GM12878 (cell line): ENCODE measurements at regions of chrX and their contacts with region 1.

Region 1: DNA sequence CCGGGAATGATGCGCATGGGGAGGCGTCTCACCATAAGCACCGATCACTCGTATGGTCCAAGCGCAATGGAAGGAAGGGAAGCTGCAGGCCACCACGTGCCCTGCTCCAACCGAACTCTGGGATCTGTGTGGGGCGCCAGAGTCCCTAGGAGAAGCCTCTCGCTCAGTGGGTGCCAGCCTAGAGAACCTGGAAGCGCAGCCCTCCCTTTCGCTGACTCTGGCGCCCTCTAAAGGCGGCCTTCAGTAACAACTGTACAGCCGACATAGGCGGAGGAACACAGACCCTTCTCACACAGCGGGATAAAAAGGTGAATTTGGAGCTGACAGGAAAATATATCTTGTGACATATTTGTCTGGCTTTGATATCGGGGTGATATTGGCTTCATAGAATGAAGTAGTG is 76.0 kb downstream of the INTS6L start:
- DNase-seq: no peak
- ATAC-seq: peak; percentile 95
- H3K4me3 ChIP-seq: no peak overlapping the region
- H3K27ac ChIP-seq: no peak overlapping the region
- H3K4me1 ChIP-seq: no peaks in the 10 kb centered on the region
- H3K27me3 ChIP-seq: no peaks in the 10 kb centered on the region
- CTCF ChIP-seq: peak; percentile 55 to 68 (median 67)
- EP300 ChIP-seq: no peak
- POLR2A ChIP-seq: no peak
- RAD21 ChIP-seq: peak; percentile 65

Region 2: GRCh38 chrX:135185795-135186443 is 410.6 kb before region 1 on chrX:
- CTCF ChIA-PET with region 1: no interaction called
- POLR2A ChIA-PET with region 1: no interaction called
- RAD21 ChIA-PET with region 1: no interaction called
- SMC1A ChIA-PET with region 1: no interaction called
- in situ Hi-C with region 1: no loop called
- intact Hi-C with region 1: loop called (anchors 1 kb)
- DNase-seq: peak; percentile 11
- ATAC-seq: peak; percentile 97
- H3K4me3 ChIP-seq: no peak overlapping the region
- H3K27ac ChIP-seq: no peak overlapping the region
- H3K4me1 ChIP-seq: no peaks in the 10 kb centered on the region
- H3K27me3 ChIP-seq: no peaks in the 10 kb centered on the region
- CTCF ChIP-seq: peak; percentile 58 to 71 (median 70)
- EP300 ChIP-seq: no peak
- POLR2A ChIP-seq: no peak
- RAD21 ChIP-seq: peak; percentile 82

Region 3: DNA sequence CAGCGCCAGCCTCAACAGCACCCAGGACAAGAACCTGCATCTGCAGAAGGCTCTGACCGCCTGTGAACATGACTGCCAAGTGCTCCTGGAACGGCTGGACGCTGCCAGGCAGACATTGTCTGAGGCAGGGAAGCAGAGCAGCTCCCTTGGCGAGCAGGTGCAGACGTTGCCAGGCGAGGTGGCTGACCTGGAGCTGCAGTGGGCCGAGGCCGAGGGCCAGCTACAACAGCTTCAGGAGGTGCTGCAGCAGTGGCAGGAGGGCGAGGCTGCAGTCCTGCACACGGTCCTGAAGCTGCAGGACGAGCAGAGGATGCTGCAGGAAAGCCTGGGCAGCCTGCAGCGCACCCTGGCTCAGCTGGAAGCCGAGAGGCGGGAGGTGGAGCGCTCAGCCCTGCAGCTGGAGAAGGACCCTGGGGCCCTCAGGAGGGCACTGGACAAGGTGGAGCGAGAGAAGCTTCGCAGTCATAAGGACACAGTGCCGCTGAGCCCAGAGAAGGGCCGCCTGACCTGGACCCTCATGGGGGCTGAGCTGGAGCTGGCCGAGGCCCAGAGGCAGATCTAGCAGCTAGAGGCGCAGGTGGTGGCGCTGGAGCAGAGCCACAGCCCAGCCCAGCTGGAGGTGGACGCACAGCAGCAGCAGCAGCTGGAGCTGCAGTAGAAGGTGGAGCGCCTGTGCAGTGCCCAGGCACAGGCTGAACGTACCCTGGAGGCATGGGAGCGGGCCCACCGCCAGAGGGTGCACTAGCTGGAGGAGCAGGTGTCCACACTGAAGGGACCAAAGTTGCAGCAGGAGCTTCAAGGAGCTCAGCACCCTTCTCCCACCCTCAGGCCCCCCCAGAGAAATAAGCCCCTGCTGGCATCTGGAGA is 158.4 kb before region 1 on chrX:
- CTCF ChIA-PET with region 1: no interaction called
- POLR2A ChIA-PET with region 1: no interaction called
- RAD21 ChIA-PET with region 1: no interaction called
- SMC1A ChIA-PET with region 1: no interaction called
- in situ Hi-C with region 1: no loop called
- intact Hi-C with region 1: no loop called
- DNase-seq: no peak
- ATAC-seq: peak; percentile 92
- H3K4me3 ChIP-seq: no peak overlapping the region
- H3K27ac ChIP-seq: no peak overlapping the region
- H3K4me1 ChIP-seq: no peaks in the 10 kb centered on the region
- H3K27me3 ChIP-seq: no peaks in the 10 kb centered on the region
- CTCF ChIP-seq: peak in 1 of 3 experiments; percentile 35; a peak in 2 of 6 replicates
- EP300 ChIP-seq: no peak
- POLR2A ChIP-seq: no peak
- RAD21 ChIP-seq: no peak

Region 4: DNA sequence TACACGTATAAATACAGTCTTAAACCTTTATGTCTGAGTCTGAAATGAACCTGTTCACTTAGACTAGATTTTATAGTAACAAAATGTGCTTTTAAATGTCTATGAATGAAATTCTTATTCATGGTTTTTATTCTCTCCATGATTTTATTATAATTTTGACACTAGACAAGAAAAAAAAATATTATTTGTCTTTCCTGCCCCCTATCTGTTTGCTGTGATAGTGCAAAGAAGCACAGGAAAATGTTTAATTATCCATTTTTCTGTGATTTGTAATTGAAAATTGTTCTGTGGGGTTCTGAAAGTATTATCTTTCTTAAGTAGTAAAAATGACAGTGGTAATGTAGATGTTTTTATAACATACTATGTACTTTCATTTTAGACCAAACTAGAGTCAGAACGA is 24.1 kb before region 1 on chrX:
- CTCF ChIA-PET with region 1: interaction called, 11 read pairs
- POLR2A ChIA-PET with region 1: no interaction called
- RAD21 ChIA-PET with region 1: interaction called, 6 read pairs
- SMC1A ChIA-PET with region 1: interaction called, 3 read pairs
- in situ Hi-C with region 1: no loop called
- intact Hi-C with region 1: no loop called
- DNase-seq: no peak
- ATAC-seq: no peak
- H3K4me3 ChIP-seq: no peak overlapping the region
- H3K27ac ChIP-seq: no peak overlapping the region
- H3K4me1 ChIP-seq: no peaks in the 10 kb centered on the region
- H3K27me3 ChIP-seq: no peaks in the 10 kb centered on the region
- CTCF ChIP-seq: peak in 2 of 3 experiments; percentile 20 to 27; a peak in 3 of 6 replicates
- EP300 ChIP-seq: no peak
- POLR2A ChIP-seq: no peak
- RAD21 ChIP-seq: peak; percentile 38; the same call in 1 of the 2 replicates